Ascending aorta (tissue), 2 donors: ENCODE measurements at regions of chr9 and their contacts with region 1.

Region 1: DNA sequence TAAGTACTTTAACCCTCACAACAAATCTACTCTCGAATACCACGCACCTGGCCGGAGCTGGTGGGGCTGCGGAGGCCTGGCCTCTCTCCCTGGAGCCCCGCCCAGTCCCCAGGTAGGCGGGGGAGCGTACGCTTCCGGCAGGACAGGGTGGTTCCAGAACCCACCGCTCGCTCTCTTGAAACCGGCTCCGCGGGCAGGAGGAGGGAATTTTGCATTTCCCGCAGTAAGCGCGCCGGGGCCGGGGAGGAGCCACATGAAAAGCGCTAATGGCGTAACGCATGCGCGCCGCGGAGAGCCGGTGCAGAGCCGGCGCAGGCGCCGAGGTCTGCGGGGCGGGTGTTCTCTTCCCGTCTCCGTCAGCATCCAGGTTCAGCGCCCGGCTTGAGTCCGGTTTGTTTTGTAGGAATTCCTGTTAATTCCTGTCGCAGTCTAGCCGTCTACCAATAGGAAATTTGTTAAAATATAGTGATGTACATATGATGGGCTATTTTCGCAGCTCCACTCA is 20.8 kb downstream of the CAVIN4 start:
- DNase-seq: peak in 1 of 2 donors; percentile 88
- H3K4me3 ChIP-seq: peak overlapping the region; percentile 47 to 63
- H3K27ac ChIP-seq: no peak overlapping the region
- H3K4me1 ChIP-seq: peaks cover 0 to 5% of the 10 kb centered on the region in 2 donors
- H3K27me3 ChIP-seq: no peaks in the 10 kb centered on the region
- CTCF ChIP-seq: no peak

Region 2: GRCh38 chr9:100098887-100099721 is 499.6 kb before region 1 on chr9 and contains the starts of genes ERP44 and INVS:
- intact Hi-C with region 1: loop called (anchors 10 kb)
- DNase-seq: peak; percentile 98 to 100
- H3K4me3 ChIP-seq: peak within 1 kb of the TSS; percentile 62 to 77
- H3K27ac ChIP-seq: peak within 1 kb of the TSS; percentile 79 to 81
- H3K4me1 ChIP-seq: peaks cover 0 to 16% of the 10 kb centered on the region in 2 donors
- H3K27me3 ChIP-seq: no peaks in the 10 kb centered on the region
- CTCF ChIP-seq: no peak
- total RNA-seq, gene ERP44: 10.7 TPM
- total RNA-seq, gene INVS: 8.5 TPM

Region 3: DNA sequence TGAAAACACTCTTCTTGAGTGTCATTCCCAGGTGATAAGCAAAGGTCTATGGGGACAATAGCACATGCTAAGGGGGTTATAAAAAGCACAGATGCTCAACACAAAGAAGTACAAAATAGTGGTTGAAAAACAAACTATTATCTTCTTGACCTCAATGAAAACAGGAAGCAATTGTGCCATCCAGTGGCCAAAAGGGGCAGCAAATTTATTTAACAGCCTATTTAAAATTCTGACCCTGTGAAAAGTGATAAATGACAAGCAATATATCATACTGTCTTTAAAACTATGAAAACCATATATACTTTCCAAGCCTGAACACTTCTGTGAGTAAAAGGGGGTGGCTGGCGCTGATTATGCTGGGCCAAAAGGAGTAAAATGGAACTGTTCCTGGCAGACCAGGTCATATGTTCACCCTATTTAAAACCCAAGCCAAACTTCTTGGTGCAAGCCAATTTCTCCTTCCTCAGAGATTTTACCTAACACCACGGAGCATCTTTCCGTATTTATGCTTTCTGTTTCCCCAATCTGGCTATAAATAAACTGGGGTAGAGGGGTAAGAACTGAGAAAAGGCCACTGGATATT is 275.6 kb before region 1 on chr9:
- intact Hi-C with region 1: loop called (anchors 10 kb)
- DNase-seq: no peak
- H3K4me3 ChIP-seq: no peak overlapping the region
- H3K27ac ChIP-seq: no peak overlapping the region
- H3K4me1 ChIP-seq: no peaks in the 10 kb centered on the region
- H3K27me3 ChIP-seq: no peaks in the 10 kb centered on the region
- CTCF ChIP-seq: peak in 2 of 3 experiments; percentile 59 to 69

Region 4: GRCh38 chr9:100352727-100353505 is 245.8 kb before region 1 on chr9 and contains the start of gene TEX10:
- intact Hi-C with region 1: loop called (anchors 5 kb)
- DNase-seq: peak; percentile 18 to 93
- H3K4me3 ChIP-seq: peak within 1 kb of the TSS; percentile 97
- H3K27ac ChIP-seq: peak within 1 kb of the TSS; percentile 78 to 85
- H3K4me1 ChIP-seq: peaks cover 3% of the 10 kb centered on the region in 2 donors
- H3K27me3 ChIP-seq: no peaks in the 10 kb centered on the region
- CTCF ChIP-seq: no peak
- total RNA-seq, gene TEX10: 2.3 TPM

Region 5: DNA sequence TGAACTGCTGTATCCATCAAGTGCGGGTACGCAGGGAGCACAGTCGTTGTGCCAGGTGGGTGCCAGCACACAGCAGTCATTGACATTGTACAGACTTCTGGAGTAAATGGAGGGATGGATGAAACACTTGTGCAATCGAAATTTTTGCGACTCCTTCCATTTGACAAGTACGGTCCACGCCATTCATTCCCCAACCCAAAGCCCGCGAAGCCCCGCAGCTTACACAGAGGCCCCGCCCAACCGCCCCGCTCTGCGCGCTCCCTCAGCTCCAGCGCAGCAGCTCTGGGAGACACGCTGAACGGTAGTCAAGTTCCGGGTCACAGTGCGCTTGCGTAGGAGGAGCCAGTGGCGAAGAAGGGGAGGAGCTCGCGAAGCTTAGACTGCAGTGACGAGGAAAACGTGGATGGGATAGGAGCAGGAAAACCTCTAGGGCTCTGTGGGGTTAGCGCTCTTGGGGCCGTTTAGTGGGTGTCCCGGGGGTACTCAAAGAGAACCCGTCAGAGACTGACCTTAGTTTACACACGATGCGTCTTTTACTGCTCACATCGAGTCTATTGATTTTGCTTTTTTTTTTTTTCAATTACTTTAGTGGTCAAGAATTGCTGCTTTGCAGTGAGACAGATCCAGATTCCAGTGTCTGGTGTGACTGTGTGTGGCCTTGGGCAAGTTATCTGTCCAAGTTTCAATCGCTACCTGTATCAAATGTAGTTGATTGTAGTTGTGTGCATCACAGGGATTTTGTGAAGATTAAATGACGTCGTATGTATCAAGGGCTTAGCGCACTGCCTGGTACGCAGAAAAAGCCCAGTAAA is 187.0 kb before region 1 on chr9:
- intact Hi-C with region 1: loop called (anchors 5 kb)
- DNase-seq: peak; percentile 44 to 94
- H3K4me3 ChIP-seq: peak overlapping the region; percentile 60 to 78
- H3K27ac ChIP-seq: no peak overlapping the region
- H3K4me1 ChIP-seq: no peaks in the 10 kb centered on the region
- H3K27me3 ChIP-seq: no peaks in the 10 kb centered on the region
- CTCF ChIP-seq: no peak

Region 6: DNA sequence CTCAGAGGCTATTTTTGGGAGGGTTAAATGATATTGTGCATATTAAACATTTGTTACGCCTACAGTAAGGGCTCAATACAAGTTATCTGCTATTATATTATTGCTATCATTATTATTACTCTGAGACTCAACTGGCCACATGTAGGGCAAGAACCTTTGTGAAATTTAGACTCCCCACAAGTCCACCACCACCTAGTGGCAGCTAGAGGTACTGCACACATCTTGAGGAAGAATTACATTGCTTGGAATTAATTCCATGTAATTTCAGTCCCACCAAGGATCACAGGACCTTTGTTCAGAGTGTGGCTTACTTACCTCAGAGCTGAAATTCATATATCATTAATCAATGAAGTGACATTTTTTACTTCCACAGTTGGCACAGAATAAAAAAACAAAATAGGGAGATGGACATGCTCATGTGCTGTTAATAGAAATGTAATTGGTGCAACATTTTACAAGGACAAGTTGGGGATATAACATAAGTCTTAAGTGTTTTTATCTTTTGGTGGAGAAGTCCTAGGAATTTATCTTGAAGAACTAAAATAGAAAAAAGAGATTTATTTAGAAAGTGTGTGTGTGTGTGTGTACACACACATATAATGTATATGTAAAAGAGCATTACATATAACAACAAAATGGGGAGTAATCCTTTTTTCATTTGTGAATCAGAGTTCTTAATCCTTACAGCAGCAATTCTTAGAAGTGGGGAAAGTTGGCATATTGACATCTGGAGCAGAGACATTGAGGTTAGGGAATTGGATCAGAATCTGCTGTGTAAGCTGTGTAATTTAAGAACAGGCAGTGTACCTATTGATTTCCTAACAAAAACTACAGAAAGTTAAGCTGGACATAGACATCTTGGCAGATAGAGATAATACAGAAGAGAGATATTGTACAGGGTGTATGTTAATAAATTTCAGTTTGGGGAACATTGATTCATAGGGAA is 160.6 kb before region 1 on chr9:
- intact Hi-C with region 1: loop called (anchors 5 kb)
- DNase-seq: peak in 1 of 2 donors; percentile 90
- H3K4me3 ChIP-seq: no peak overlapping the region
- H3K27ac ChIP-seq: no peak overlapping the region
- H3K4me1 ChIP-seq: peaks cover 0 to 3% of the 10 kb centered on the region in 2 donors
- H3K27me3 ChIP-seq: no peaks in the 10 kb centered on the region
- CTCF ChIP-seq: peak; percentile 42 to 94 (median 90)

Region 7: DNA sequence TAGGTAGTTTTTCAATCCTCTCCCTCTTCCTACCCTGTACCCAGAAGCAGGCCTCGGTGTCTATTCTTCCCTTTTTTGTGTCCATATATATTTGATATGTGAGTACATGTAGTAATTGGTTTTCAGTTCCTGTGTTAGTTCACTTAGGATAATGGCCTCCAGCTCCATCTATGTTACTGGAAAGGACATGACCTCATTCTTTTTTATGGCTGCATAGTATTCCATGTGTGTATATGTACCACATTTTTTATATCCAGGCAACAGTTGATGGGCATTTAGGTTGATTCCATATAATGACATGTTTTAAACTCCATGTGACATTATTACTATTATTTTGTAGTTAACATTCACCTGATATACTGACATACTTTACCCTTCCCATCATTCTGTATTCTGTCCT is 28.3 kb after region 1 on chr9:
- intact Hi-C with region 1: no loop called
- DNase-seq: no peak
- H3K4me3 ChIP-seq: no peak overlapping the region
- H3K27ac ChIP-seq: no peak overlapping the region
- H3K4me1 ChIP-seq: no peaks in the 10 kb centered on the region
- H3K27me3 ChIP-seq: no peaks in the 10 kb centered on the region
- CTCF ChIP-seq: no peak

Region 8: GRCh38 chr9:101311758-101312420 is 713.2 kb after region 1 on chr9:
- intact Hi-C with region 1: loop called (anchors 5 kb)
- DNase-seq: no peak
- H3K4me3 ChIP-seq: no peak overlapping the region
- H3K27ac ChIP-seq: no peak overlapping the region
- H3K4me1 ChIP-seq: no peaks in the 10 kb centered on the region
- H3K27me3 ChIP-seq: no peaks in the 10 kb centered on the region
- CTCF ChIP-seq: peak; percentile 17 to 64 (median 46)